ENCODE measurements at regions of chr2 and their contacts with region 1.

Region 1: GRCh38 chr2:176126929-176127773 is 2.4 kb upstream of the HOXD8 start:
- DNase-seq: peak in 7 of 10 donors; percentile 55 to 92 (median 77)

Region 2: DNA sequence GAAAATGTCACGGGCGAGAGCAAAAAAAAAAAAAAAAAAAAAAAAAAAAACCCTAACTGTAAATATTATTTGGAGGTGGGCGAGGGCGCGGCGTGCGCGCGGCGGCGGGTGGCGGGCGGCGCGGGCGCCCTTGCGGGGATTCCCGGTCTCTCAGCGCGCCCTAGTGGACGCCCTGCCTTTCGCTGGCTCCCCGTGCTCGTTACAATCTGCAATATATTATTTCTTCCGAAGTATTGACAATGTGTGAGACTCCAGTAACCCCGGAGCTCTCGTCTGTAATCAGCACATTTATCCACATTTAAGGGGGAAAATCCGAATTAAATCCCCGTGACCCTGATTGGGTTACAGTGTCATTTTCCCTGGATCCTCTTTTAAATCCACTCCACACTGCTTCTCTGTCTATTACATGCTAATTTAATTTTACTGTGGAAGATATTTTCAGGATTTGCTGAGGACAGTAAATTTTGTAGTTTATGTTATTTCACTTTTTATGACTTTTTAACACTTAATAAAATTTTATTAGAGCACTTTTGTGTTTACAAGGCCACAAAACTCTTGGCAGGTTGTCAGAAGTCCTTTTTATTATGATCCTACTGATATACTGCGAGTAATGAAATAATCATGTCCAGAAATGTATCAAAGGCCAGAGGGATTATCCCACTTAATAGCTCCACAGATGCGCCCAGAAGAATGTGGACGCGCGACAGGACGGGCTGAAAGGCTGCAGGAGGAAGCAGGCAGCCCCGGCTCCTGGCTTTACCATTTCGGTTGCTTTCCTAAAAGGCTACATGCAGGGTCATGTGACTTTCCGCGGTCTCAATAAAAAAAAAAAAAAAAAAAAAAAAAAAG is 511.2 kb after region 1 on chr2:
- intact Hi-C with region 1: loop called (anchors 5 kb)
- DNase-seq: peak; percentile 36 to 94 (median 68)

Region 3: DNA sequence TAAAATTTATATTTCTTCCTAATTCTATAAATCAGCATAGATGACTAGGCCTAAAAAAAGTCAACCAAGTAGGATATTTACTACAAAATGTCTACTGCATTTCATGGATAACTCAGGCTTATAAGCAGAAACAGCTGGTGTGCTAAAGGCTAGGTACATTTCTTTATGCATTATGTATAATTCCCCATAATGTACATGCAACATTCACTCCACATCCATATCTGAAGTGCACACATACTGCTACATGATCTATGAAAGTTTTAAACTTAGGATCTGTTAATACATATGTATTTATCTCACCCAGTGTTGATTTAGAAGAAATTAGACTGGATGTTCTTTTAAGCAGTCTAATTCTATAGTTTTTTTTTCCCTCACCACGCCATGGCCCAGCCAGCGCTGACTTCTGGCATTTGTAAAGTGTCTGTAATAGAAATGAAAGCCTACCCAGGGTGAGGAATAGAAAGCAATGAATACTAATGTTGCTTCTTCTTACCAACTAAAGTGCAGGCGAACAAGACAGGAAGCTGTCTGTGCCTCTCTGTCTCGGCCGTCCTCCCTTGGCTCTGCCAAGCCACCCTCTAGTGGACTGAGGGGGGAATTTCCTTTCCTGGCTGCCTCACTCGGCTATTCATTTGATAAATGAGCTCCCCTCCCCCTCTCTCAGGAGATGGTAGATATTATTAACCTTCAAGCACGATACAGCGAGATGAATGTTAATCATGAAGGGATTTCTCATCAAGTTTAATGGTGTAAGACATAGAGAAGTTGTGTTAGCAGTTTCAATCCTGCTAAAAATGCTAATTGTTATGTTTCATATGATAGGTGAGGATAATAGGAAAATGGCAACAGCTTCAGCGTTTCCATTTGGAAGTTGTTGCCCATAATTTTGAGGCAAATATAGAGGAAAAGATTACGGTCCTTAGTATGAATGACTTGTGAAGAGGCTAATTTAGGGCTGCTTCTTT is 526.6 kb after region 1 on chr2:
- intact Hi-C with region 1: loop called (anchors 2 kb)
- DNase-seq: peak in 8 of 10 donors; percentile 12 to 89 (median 41)

Region 4: DNA sequence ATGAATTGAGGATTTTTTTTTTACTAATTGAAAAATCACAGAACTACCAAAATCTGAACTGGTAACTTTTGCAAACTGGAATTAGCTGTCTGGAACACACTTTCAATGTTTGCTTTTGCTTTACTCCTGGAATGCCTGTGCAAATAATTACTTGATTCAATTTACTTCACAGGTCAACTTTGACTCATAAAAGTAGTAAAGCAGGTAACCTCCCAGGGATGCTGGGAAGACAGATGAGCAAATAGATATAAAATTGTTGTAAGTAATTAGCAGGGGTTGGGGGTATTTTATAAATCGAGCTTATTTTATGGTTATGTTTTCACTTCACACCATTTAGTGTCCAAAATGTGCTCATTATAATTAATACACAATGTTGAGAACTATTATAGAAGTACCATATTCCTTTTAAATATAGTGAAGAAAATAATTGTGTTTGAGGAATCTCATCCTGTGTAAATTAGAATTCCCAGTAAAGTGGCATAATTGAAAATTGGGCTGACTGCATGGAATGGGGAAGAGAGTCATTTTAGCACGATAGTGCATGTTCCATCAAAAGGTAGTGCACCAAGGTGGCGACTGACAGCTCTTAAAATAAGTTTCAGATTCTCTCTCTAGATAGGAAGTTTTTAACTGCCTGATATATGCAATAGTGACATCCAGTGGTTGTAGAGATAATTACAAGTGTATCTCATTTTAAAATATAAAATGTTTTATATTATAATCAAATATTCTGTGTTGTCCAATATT is 687.3 kb after region 1 on chr2:
- intact Hi-C with region 1: loop called (anchors 5 kb)
- DNase-seq: no peak

Region 5: GRCh38 chr2:177148477-177149154 is 1021.5 kb after region 1 on chr2:
- intact Hi-C with region 1: loop called (anchors 5 kb)
- DNase-seq: peak in 9 of 10 donors; percentile 51 to 94 (median 72)